ENCODE measurements at regions of chr7 and their contacts with region 1.

Region 1: DNA sequence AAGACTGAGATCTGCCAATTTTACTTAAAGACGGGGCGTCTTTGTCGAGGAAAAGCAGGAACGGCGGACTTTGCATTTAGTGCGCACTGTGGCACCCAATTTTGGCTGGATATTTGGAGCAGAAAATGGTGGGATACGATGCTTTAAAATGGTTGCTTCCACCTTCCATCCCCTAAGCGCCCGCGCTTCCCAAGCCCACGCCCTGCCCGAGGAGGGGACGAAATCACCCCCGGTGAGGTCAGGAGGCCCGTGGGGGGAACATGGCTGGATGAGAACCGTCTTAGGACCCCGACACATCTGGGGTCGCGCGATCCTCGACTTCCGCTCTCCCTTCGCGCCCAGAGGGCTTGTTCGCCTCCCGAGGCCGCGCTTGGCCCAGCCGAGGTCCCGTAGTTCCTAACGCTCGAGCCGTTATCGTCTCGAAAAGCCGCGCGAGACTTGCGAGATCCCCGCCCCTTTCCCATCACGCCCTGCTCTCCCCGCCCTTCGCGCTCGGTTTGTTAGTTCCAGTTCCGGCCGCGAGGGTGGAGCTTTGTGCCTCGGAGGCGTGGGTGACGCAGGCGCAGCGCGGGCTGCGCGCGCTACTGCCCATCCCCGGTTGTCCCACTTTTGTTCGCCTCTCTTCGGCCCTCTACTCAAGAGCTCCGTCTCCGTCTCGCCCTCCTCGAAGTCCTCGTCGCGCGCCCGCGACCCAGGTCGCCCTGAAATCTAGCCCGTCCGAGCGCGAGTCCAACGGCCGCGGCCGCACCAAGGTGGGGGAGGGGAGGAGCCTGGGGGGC is at the start of gene SRRT:
- DNase-seq: peak; percentile 99
- ATAC-seq: peak; percentile 95
- H3K4me3 Mint-ChIP-seq: peak within 1 kb of the TSS; percentile 99
- H3K27ac Mint-ChIP-seq: peak within 1 kb of the TSS; percentile 99
- H3K4me1 Mint-ChIP-seq: peaks cover 45% of the 10 kb centered on the region
- H3K27me3 Mint-ChIP-seq: no peaks in the 10 kb centered on the region
- total RNA-seq, gene SRRT: 253 to 260 TPM

Region 2: GRCh38 chr7:100611974-100612729 is 262.6 kb before region 1 on chr7 and contains the start of gene MOSPD3:
- CTCF ChIA-PET with region 1: no interaction called
- POLR2A ChIA-PET with region 1: interaction called, 4 read pairs
- intact Hi-C with region 1: loop called (anchors 1 to 5 kb)
- DNase-seq: peak; percentile 99
- ATAC-seq: peak; percentile 94
- H3K4me3 Mint-ChIP-seq: peak within 1 kb of the TSS; percentile 83
- H3K27ac Mint-ChIP-seq: peak within 1 kb of the TSS; percentile 100
- H3K4me1 Mint-ChIP-seq: peaks cover 17% of the 10 kb centered on the region
- H3K27me3 Mint-ChIP-seq: no peaks in the 10 kb centered on the region
- total RNA-seq, gene MOSPD3: 14.4 to 19.9 TPM

Region 3: DNA sequence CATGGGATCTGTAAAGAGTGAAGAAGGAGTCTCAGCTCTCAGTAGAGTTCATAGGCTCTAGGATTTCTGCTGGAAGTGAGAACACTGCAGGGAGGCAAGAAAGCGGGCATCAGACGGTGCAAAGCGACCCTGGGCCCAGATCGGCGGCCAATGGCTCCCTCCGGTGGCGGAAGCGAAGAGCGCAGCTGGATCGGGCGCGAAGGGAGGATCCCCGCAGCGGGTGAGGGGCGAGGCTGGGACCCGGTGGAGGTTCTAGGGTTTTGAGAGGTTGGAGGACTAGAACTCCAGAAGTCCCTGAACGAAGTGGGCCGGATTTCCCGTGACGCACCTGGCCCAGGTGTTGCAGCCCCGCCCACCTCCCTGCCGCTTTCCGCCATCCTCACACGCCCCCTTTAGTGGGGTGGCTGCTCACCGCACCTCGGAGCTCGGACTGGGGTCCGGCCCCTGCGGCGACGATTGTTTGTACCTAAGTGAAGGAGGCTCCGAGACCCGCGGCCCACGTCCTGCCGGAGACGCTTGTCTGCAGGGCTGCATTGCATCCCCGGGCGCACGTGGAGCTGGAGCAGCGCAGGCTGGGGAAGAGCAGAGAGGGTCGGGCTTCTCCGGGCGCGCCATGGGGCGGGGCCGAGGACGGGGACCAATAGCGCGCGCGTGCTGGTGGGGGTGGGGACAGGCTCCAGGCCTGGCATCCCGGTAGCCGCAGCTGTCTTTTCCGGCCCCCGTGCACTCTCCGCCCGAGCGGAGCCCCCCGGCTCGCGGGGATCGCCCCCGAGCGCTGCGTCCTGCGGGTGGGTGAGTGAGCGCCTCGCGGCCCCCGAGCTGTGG is 22.5 kb before region 1 on chr7 and contains the start of gene SLC12A9:
- CTCF ChIA-PET with region 1: interaction called, 5 read pairs
- POLR2A ChIA-PET with region 1: interaction called, 9 read pairs
- intact Hi-C with region 1: loop called in 1 of 2 experiments (anchors 1 kb)
- DNase-seq: peak; percentile 93
- ATAC-seq: peak; percentile 98
- H3K4me3 Mint-ChIP-seq: peak within 1 kb of the TSS; percentile 87
- H3K27ac Mint-ChIP-seq: peak within 1 kb of the TSS; percentile 91
- H3K4me1 Mint-ChIP-seq: peaks cover 11% of the 10 kb centered on the region
- H3K27me3 Mint-ChIP-seq: no peaks in the 10 kb centered on the region
- total RNA-seq, gene SLC12A9: 13.6 to 15.6 TPM

Region 4: GRCh38 chr7:100942045-100942768 is 67.4 kb after region 1 on chr7:
- CTCF ChIA-PET with region 1: no interaction called
- POLR2A ChIA-PET with region 1: no interaction called
- intact Hi-C with region 1: no loop called
- DNase-seq: no peak
- ATAC-seq: no peak
- H3K4me3 Mint-ChIP-seq: no peak overlapping the region
- H3K27ac Mint-ChIP-seq: no peak overlapping the region
- H3K4me1 Mint-ChIP-seq: no peaks in the 10 kb centered on the region
- H3K27me3 Mint-ChIP-seq: peaks cover 12% of the 10 kb centered on the region

Region 5: DNA sequence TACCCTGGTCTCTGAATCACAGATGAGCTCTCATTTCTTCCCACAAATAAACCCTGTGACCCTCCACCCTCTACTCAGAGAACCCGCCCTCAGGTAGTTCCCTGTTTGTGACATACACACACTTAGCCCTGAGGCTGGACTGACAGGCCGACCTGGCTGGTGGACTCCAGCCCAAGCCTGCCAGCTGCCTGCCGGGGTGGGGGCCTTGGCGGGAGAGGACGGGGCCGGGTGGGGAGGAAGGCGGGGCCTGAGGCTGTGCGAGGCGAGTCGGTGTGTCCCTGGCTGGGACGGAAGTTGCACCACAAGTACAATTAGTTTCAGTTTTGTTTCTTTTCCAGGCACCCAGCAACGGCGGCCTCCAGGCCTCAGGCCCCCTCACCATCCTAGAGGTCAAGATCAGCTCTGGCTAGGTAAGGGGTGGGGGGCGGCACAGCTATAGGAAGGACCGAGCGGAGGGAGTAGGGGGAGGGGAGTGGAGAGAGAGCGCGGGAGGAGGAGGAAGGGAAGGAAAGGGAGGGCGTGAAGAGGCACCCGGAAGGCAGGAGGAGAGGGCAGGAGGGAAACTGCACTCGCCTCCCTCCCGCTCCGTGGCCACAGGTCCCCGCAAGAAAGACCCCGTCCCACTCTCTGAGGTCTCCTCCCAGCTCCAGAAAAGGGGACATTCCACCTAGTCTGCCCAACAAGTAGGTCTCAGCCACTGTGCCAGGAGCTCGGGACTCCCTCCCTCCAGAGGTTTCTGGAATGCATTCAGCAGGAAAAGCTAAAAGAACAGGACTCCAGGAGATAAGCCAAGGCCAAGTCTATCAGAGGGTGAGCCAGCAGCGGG is 210.6 kb after region 1 on chr7 and contains the start of gene TRIM56:
- CTCF ChIA-PET with region 1: no interaction called
- POLR2A ChIA-PET with region 1: interaction called, 9 read pairs
- intact Hi-C with region 1: loop called in 1 of 2 experiments (anchors 1 kb)
- DNase-seq: peak; percentile 88
- ATAC-seq: peak; percentile 90
- H3K4me3 Mint-ChIP-seq: peak within 1 kb of the TSS; percentile 94
- H3K27ac Mint-ChIP-seq: peak within 1 kb of the TSS; percentile 98
- H3K4me1 Mint-ChIP-seq: peaks cover 26% of the 10 kb centered on the region
- H3K27me3 Mint-ChIP-seq: no peaks in the 10 kb centered on the region
- total RNA-seq, gene TRIM56: 35.3 to 40.8 TPM

Region 6: DNA sequence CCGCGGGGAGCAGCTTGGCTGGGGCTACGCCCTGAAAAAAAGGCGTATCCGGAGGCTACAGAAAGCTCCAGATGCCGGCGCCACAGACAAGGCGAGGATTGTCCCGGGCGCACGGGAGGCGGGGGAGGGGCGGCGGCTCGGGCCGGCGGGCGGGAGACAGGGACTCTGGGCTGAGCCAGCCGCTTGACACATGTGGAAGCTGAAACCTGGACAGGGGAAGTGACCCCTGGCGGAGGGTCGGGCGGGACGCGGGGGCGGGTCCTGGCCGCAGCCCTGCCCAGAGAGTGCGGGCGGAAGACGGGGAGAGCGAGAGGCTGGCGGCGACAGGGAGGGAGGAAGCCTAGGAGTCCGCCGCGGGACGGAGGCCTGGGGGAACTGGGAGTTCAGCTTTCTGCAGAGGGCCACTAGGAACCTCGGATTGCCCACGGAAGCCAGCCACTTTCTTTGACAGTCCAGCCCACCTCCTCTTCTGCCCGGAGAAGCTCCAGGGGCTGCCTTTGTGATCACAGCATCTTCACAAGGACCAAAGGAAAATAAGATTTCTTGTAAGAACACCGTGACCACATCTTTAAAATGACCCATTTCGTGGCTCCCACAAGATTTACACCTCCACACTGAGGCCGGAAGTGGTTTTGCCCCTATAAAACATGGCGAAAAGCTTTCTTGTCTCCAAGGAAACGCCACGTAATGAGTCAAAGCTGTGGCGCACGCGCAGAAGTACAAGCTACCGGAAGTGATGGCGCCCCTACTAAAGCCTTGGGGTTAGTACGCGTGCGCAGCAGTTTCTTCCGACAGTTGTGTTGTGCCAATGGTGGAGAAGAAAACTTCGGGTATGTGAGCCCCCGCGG is 342.8 kb after region 1 on chr7 and contains the starts of genes PLOD3 and ZNHIT1:
- CTCF ChIA-PET with region 1: no interaction called
- POLR2A ChIA-PET with region 1: interaction called, 4 read pairs
- intact Hi-C with region 1: loop called in 1 of 2 experiments (anchors 1 kb)
- DNase-seq: peak; percentile 97
- ATAC-seq: peak; percentile 88
- H3K4me3 Mint-ChIP-seq: peak within 1 kb of the TSS; percentile 99
- H3K27ac Mint-ChIP-seq: peak within 1 kb of the TSS; percentile 85
- H3K4me1 Mint-ChIP-seq: peaks cover 31% of the 10 kb centered on the region
- H3K27me3 Mint-ChIP-seq: no peaks in the 10 kb centered on the region
- total RNA-seq, gene PLOD3: 30.7 to 35.9 TPM
- total RNA-seq, gene ZNHIT1: 44.2 TPM

Region 7: GRCh38 chr7:101251871-101252659 is 377.3 kb after region 1 on chr7:
- CTCF ChIA-PET with region 1: no interaction called
- POLR2A ChIA-PET with region 1: interaction called, 3 read pairs
- intact Hi-C with region 1: loop called in 1 of 2 experiments (anchors 1 kb)
- DNase-seq: peak; percentile 99
- ATAC-seq: peak; percentile 100
- H3K4me3 Mint-ChIP-seq: peak overlapping the region; percentile 96
- H3K27ac Mint-ChIP-seq: peak overlapping the region; percentile 96
- H3K4me1 Mint-ChIP-seq: peaks cover 26% of the 10 kb centered on the region
- H3K27me3 Mint-ChIP-seq: peaks cover 5% of the 10 kb centered on the region

Measured in activated CD4-positive, alpha-beta T cell treated with anti-CD3 and anti-CD28 coated beads for 36 hours (primary cell).